ENCODE measurements at regions of chr3 and their contacts with region 1.

Region 1: GRCh38 chr3:14467814-14468620 is 65.6 kb downstream of the SLC6A6 start:
- DNase-seq: peak; percentile 51 to 91
- ATAC-seq: peak; percentile 51 to 68; a peak in 5 of 6 replicates
- H3K4me3 ChIP-seq: no peak overlapping the region
- H3K27ac ChIP-seq: no peak overlapping the region
- H3K4me1 ChIP-seq: peaks cover 24% of the 10 kb centered on the region
- CTCF ChIP-seq: peak; percentile 74
- EP300 ChIP-seq: no peak
- POLR2A ChIP-seq: no peak
- RAD21 ChIP-seq: peak; percentile 85 to 88

Region 2: DNA sequence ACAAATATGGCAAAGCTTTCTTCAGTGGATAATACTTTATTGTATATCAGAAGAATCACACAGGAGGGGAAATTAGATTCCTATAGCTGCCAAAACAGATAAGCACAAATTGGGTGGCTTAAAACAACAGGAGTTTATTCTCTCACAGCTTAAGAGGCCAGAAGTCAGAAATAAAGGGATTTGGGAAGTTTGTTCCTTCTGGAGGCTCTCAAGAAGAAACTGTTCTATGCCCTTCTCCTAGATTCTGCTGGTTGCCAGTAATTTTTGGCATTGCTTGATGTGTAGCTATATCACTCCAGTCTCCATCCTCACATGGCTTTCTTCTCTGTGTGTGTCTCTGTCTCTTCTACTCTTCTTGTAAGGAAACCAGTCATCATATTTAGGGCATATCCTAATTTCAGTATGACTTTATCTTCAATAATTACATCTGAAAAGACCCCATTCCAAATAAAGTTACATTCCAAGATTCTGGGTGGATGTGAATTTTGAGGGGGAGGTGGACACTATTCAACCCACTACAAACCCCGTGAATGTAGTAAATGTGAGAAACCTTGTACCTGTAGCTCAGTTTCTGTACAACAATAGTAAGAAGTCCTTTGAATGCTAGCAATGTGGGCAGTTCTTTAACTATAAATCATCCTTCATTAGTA is 566.0 kb before region 1 on chr3:
- CTCF ChIA-PET with region 1: no interaction called
- POLR2A ChIA-PET with region 1: no interaction called
- DNase-seq: no peak
- ATAC-seq: no peak
- H3K4me3 ChIP-seq: no peak overlapping the region
- H3K27ac ChIP-seq: no peak overlapping the region
- H3K4me1 ChIP-seq: no peaks in the 10 kb centered on the region
- CTCF ChIP-seq: no peak
- EP300 ChIP-seq: no peak
- POLR2A ChIP-seq: no peak
- RAD21 ChIP-seq: no peak

Region 3: GRCh38 chr3:14266361-14266760 is 201.7 kb before region 1 on chr3:
- CTCF ChIA-PET with region 1: interaction called, 173 read pairs
- POLR2A ChIA-PET with region 1: no interaction called
- DNase-seq: no peak
- ATAC-seq: no peak
- H3K4me3 ChIP-seq: no peak overlapping the region
- H3K27ac ChIP-seq: no peak overlapping the region
- H3K4me1 ChIP-seq: peaks cover 16% of the 10 kb centered on the region
- CTCF ChIP-seq: no peak
- EP300 ChIP-seq: no peak
- POLR2A ChIP-seq: no peak
- RAD21 ChIP-seq: no peak

Region 4: GRCh38 chr3:14402304-14402811 is 65.7 kb before region 1 on chr3 and contains the start of gene SLC6A6:
- CTCF ChIA-PET with region 1: interaction called, 23 read pairs
- POLR2A ChIA-PET with region 1: no interaction called
- DNase-seq: peak; percentile 91 to 97
- ATAC-seq: peak; percentile 62 to 83
- H3K4me3 ChIP-seq: peak within 1 kb of the TSS; percentile 75
- H3K27ac ChIP-seq: peak within 1 kb of the TSS; percentile 92 to 98
- H3K4me1 ChIP-seq: peaks cover 33% of the 10 kb centered on the region
- CTCF ChIP-seq: no peak; the same call in 2 of the 3 replicates
- EP300 ChIP-seq: no peak
- POLR2A ChIP-seq: peak; percentile 88
- RAD21 ChIP-seq: peak; percentile 27 to 60; a peak in 4 of 5 replicates
- polyA plus RNA-seq, gene SLC6A6: 73.3 and 76.2 TPM in 2 replicates

Region 5: DNA sequence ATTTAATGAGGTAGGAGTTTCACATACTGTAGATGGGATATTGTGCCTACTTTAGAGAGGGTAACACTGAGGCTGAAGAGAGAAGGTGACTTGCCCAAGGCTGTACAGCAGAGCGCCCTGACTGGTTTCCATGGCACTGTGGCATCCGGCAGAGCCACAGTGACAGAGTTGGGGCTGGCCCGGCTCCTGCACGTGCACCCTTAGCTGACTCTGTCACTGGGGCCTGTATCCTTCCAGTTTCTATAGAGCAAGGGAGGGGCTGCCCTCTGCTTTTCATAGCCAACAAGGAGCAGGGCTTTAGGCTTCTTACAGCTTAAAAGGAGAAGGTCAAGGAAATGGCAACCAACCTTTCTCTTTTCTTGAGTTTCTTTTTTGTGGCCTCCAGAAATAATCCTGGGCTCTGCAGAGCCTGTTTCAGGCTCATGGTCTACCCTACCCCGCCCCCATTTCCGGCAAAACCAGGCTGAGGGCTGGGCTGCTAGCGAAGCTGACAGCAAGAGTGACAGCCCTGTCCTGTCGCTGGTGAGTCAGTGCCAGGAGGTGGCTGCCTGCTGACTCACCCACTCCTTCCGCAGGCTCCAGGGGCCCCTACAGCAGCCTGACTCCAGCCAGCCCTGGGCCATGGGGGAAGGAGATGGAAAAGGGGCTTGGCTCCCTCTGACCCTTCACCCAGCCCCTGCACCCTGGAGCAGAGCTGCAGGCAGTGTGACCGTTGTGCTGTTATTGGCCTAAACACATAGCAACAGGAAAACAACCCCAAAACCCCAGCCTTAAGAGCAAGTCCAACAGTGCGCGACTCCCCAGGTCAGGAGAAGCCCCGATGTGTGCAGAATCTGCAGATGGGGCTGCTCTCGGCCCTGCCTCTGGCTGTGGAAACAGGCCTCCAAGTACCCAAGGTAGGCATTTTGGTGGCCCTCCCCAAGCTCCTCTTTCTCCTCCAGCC is 35.9 kb before region 1 on chr3:
- CTCF ChIA-PET with region 1: interaction called, 12 read pairs
- POLR2A ChIA-PET with region 1: no interaction called
- DNase-seq: peak; percentile 69 to 91
- ATAC-seq: peak; percentile 79 to 81
- H3K4me3 ChIP-seq: no peak overlapping the region
- H3K27ac ChIP-seq: peak overlapping the region; percentile 44 to 85; a peak in 5 of 6 replicates
- H3K4me1 ChIP-seq: peaks cover 83% of the 10 kb centered on the region
- CTCF ChIP-seq: no peak
- EP300 ChIP-seq: no peak
- POLR2A ChIP-seq: no peak
- RAD21 ChIP-seq: no peak

Region 6: GRCh38 chr3:14439579-14440518 is 28.2 kb before region 1 on chr3:
- CTCF ChIA-PET with region 1: interaction called, 10 read pairs
- POLR2A ChIA-PET with region 1: no interaction called
- DNase-seq: no peak
- ATAC-seq: peak in 1 of 2 experiments; percentile 10; a peak in 2 of 6 replicates
- H3K4me3 ChIP-seq: no peak overlapping the region
- H3K27ac ChIP-seq: peak overlapping the region; percentile 11 to 68; a peak in 4 of 6 replicates
- H3K4me1 ChIP-seq: peaks cover 72% of the 10 kb centered on the region
- CTCF ChIP-seq: no peak
- EP300 ChIP-seq: no peak
- POLR2A ChIP-seq: no peak
- RAD21 ChIP-seq: no peak

Region 7: GRCh38 chr3:14452679-14453367 is 15.2 kb before region 1 on chr3:
- CTCF ChIA-PET with region 1: interaction called, 36 read pairs
- POLR2A ChIA-PET with region 1: interaction called, 3 read pairs
- DNase-seq: peak; percentile 83 to 88
- ATAC-seq: peak; percentile 69 to 78
- H3K4me3 ChIP-seq: peak overlapping the region; percentile 32; the same call in 1 of the 3 replicates
- H3K27ac ChIP-seq: peak overlapping the region; percentile 90 to 97
- H3K4me1 ChIP-seq: peaks cover 59% of the 10 kb centered on the region
- CTCF ChIP-seq: no peak
- EP300 ChIP-seq: peak; percentile 4 to 59; a peak in 2 of 5 replicates
- POLR2A ChIP-seq: no peak
- RAD21 ChIP-seq: peak in 1 of 2 experiments; percentile 33; a peak in 2 of 5 replicates

Region 8: DNA sequence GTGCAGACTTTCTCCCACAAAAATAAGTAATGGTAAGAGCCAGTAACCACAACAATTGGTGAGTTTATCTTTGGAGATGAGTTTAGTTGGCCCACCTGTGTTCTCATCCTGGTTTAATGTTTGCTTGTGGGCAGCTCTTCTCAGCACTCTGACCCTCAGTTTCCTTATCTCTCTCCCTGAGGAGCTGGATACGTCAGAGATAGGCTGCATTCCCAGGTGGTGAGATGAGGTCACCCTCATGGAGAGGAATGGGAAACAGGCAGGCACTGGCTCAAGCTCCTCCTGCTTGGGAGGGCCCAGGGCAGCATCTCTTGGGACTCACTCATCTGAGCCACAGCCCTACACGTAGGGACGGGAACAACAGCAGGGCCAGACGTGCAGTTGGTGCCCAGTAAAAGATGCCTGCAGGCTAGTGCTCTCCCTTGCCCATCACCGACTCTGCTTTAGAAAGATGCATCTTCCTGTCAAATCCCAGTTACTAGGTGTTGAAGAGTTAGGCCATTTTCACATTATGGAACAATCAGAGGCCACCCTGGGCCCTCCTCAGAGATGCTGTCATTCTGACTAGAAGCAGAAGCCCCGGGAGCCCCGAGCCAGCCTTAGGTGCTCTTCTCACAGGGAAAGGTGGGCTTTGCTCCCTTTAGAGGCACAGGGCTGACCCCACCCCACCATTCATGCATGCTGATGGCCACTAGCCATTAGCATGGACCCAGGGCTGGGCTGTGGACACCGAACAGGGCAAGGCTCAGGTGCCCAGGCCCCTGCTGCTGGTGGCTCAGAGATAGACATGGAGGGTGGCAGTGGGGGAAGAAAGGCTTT is 12.4 kb after region 1 on chr3:
- CTCF ChIA-PET with region 1: interaction called, 15 read pairs
- POLR2A ChIA-PET with region 1: no interaction called
- DNase-seq: no peak
- ATAC-seq: peak in 1 of 2 experiments; percentile 25; a peak in 1 of 6 replicates
- H3K4me3 ChIP-seq: no peak overlapping the region
- H3K27ac ChIP-seq: no peak overlapping the region
- H3K4me1 ChIP-seq: no peaks in the 10 kb centered on the region
- CTCF ChIP-seq: no peak
- EP300 ChIP-seq: no peak
- POLR2A ChIP-seq: no peak
- RAD21 ChIP-seq: no peak

Region 9: DNA sequence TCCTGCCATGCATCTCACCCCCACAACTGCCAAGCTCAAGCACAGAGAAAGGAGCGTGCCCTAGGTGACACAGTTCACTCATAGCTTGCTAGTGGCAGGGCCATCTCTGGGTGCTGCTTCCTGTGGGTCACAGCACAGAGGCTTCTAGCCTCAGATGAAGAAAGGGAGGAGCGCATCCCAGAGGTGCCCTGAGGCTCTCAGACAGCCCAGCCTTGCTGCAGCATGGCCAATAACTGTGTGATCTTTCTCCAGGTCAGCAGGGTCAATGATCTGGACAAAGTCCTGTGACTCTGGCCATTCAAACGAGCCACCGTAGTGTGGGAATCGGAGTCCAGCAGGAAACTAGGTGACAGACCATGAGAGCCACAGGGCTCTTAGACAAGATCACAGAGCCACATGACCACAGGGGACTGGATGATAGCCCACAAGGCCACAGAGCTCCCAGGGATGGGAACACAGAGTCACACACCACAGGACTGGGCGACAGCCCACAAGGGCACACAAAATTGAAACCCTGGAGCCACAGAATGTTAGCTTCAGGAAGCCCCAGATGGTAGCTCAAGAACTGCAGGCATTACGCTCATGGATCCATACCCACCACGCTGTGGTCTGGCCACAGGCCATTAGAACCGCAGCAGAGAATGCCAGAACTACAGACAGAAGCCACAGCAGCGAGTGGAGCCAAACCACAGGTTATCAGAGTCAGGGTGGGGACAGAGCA is 98.0 kb after region 1 on chr3:
- CTCF ChIA-PET with region 1: no interaction called
- POLR2A ChIA-PET with region 1: no interaction called
- DNase-seq: no peak
- ATAC-seq: peak in 1 of 2 experiments; percentile 14; a peak in 3 of 6 replicates
- H3K4me3 ChIP-seq: no peak overlapping the region
- H3K27ac ChIP-seq: peak overlapping the region in 1 of 2 experiments; percentile 79; a peak in 3 of 6 replicates
- H3K4me1 ChIP-seq: peaks cover 36% of the 10 kb centered on the region
- CTCF ChIP-seq: no peak
- EP300 ChIP-seq: no peak
- POLR2A ChIP-seq: no peak
- RAD21 ChIP-seq: no peak

Region 10: DNA sequence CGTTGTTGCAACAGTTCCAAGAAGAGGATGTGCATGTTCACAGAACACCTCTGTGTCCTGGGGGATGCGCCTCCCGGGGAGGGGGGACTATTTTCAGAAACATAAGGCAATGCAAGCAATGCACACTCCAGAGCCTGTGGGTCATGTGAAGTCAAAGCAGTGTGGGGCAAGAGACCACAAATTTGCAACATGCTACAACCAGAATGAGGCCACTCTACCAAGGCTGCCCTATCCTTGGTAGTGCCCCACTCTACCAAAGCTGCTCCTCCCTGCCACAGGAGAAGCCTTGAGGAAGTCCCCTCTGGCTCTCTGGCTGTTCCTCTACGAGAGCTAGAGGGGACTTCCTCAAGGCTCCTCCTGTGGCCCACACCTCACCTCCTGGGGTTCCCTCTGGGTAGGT is 470.9 kb after region 1 on chr3:
- CTCF ChIA-PET with region 1: no interaction called
- POLR2A ChIA-PET with region 1: no interaction called
- DNase-seq: no peak
- ATAC-seq: no peak
- H3K4me3 ChIP-seq: no peak overlapping the region
- H3K27ac ChIP-seq: no peak overlapping the region
- H3K4me1 ChIP-seq: peaks cover 7% of the 10 kb centered on the region; the same call in 1 of the 3 replicates
- CTCF ChIP-seq: no peak
- EP300 ChIP-seq: no peak
- POLR2A ChIP-seq: no peak
- RAD21 ChIP-seq: no peak

Measured in A549 (cell line).